Mammary epithelial cell (primary cell): ENCODE measurements at regions of chrX and their contacts with region 1.

Region 1: GRCh38 chrX:46208225-46208854 is 336.9 kb downstream of the ZNF674 start:
- DNase-seq: peak; percentile 65
- H3K4me3 ChIP-seq: no peak overlapping the region
- H3K27ac ChIP-seq: peak overlapping the region; percentile 50
- H3K4me1 ChIP-seq: peaks cover 41% of the 10 kb centered on the region
- H3K27me3 ChIP-seq: no peaks in the 10 kb centered on the region
- CTCF ChIP-seq: no peak

Region 2: GRCh38 chrX:45781901-45782553 is 426.3 kb before region 1 on chrX:
- CTCF ChIA-PET with region 1: no interaction called
- dilution Hi-C with region 1: no loop called
- in situ Hi-C with region 1: no loop called
- intact Hi-C with region 1: no loop called
- DNase-seq: peak; percentile 79
- H3K4me3 ChIP-seq: no peak overlapping the region
- H3K27ac ChIP-seq: peak overlapping the region; percentile 69
- H3K4me1 ChIP-seq: peaks cover 76% of the 10 kb centered on the region
- H3K27me3 ChIP-seq: no peaks in the 10 kb centered on the region
- CTCF ChIP-seq: peak; percentile 25 to 54

Region 3: DNA sequence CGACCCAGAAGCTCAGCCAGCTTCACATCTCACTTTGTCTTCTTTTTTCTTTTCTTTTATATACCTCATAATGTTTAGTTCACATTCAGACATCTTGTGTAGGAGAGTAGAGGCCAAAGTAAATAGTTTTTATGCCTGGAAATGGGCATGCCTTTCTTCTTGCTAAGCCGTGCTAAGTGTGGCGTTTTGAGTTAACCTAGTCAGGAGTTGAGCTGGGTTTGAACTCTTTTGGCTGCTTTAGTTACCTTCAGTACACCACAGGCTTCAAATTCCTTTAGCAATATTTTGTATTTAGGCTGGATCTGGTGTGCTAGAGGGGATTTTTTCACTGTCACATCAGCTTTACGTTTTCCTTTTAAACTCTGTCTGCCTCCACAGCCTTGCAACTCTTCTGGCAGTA is 36.1 kb after region 1 on chrX:
- CTCF ChIA-PET with region 1: no interaction called
- dilution Hi-C with region 1: no loop called
- in situ Hi-C with region 1: no loop called
- intact Hi-C with region 1: no loop called
- DNase-seq: no peak
- H3K4me3 ChIP-seq: no peak overlapping the region
- H3K27ac ChIP-seq: no peak overlapping the region
- H3K4me1 ChIP-seq: no peaks in the 10 kb centered on the region
- H3K27me3 ChIP-seq: peaks cover 4% of the 10 kb centered on the region
- CTCF ChIP-seq: no peak

Region 4: GRCh38 chrX:46260513-46260912 is 52.2 kb after region 1 on chrX:
- CTCF ChIA-PET with region 1: no interaction called
- dilution Hi-C with region 1: no loop called
- in situ Hi-C with region 1: no loop called
- intact Hi-C with region 1: loop called (anchors 2 kb)
- DNase-seq: peak; percentile 97
- H3K4me3 ChIP-seq: no peak overlapping the region
- H3K27ac ChIP-seq: peak overlapping the region; percentile 98
- H3K4me1 ChIP-seq: peaks cover 60% of the 10 kb centered on the region
- H3K27me3 ChIP-seq: no peaks in the 10 kb centered on the region
- CTCF ChIP-seq: peak in 1 of 2 donors; percentile 12